Right lobe of liver (tissue), 6 donors: ENCODE measurements at regions of chr11 and their contacts with region 1.

Region 1: DNA sequence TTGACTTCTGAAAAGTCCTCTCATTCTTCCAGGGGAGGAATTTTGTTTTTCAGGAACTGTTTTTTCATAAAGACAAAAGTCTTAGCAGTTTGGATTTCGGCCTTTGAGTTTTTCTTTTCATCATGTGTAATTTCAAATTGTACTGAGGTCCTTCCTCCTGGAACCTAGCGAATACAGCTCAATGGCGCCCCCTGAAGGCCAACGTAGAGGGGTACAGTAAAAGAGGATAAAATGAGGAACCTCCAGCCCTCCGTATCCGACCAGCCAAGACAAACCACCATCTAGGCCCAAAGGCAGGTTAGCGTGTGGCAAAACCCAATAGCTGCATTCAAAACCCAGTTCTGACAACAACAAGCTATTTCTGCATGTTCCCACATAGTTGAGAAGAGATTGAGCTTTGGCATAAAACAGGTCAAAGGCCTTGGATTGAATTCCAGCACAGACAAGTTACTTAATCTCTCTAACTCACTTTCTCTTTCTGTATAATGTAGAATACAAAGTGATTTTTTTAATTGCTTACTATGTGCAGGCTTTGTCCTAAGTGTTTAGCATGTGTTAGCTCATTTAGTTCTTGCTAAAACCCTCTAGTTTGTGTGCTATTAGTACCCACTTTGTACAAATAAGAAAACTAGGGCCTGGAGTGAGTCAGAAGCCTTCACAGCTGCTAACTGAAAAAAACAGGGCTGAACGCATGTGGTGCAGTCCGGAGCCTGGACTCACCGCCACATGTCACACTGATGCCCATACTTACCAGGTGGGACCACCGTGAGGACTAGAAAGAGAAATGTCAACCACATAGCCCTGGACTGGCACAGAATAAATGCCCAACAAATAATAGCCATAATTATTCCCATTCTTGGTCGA is 43.2 kb upstream of the ETS1 start:
- DNase-seq: peak; percentile 89 to 91 (median 89)
- ATAC-seq: peak; percentile 89 to 91 (median 91)
- H3K4me3 ChIP-seq: no peak overlapping the region
- H3K27ac ChIP-seq: peak overlapping the region; percentile 28 to 58 (median 42)
- H3K4me1 ChIP-seq: peaks cover 0 to 30% (median 12%) of the 10 kb centered on the region in 4 donors
- H3K27me3 ChIP-seq: no peaks in the 10 kb centered on the region
- CTCF ChIP-seq: peak; percentile 90 to 97 (median 92)
- POLR2A ChIP-seq: no peak

Region 2: GRCh38 chr11:128279866-128280265 is 350.7 kb before region 1 on chr11:
- intact Hi-C with region 1: loop called in 1 of 2 experiments (anchors 10 kb)
- DNase-seq: no peak
- ATAC-seq: peak in 1 of 4 donors; percentile 23
- H3K4me3 ChIP-seq: no peak overlapping the region
- H3K27ac ChIP-seq: no peak overlapping the region
- H3K4me1 ChIP-seq: no peaks in the 10 kb centered on the region
- H3K27me3 ChIP-seq: no peaks in the 10 kb centered on the region
- CTCF ChIP-seq: no peak
- POLR2A ChIP-seq: no peak

Region 3: DNA sequence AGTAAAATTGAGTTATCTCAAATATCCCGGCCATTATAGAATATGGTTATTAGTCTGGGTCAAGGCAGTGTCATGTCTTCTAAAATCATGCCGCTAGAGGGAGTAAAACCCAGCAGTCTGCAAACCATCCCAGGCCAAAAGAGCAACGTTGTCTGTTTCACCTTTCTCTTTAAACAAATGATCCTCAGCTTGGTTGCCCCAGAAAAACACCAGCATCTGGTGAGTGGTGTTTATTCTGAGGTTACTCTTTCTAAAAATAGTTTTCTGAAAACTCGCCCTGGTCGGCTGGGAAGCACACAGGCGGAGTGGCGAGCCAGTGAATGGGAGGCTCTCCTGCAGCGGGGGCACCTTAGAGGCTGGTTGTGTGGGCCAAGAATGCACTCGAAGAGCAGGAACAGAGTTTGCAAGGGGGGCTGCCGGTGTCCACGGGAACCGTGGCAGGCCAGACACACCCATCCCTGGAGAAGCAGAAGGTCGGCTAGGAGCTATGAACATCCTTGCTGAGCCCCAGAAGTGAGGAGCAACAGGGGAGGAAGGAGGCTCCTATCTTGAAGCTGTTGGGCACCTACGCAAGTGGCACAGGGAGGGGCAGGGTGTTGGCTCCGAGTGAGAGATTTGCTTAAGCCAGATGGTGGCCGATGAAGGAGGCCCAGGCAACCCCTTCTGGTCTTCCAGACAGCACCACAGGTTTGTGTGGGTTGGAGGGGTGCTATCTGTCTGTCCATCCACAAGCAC is 340.3 kb before region 1 on chr11:
- intact Hi-C with region 1: loop called (anchors 10 kb)
- DNase-seq: peak in 2 of 3 donors; percentile 44 to 60
- ATAC-seq: peak; percentile 91 to 95 (median 95)
- H3K4me3 ChIP-seq: no peak overlapping the region
- H3K27ac ChIP-seq: peak overlapping the region; percentile 24 to 77 (median 34)
- H3K4me1 ChIP-seq: peaks cover 0 to 5% (median 0%) of the 10 kb centered on the region in 4 donors
- H3K27me3 ChIP-seq: no peaks in the 10 kb centered on the region
- CTCF ChIP-seq: peak; percentile 83 to 94 (median 87)
- POLR2A ChIP-seq: peak; percentile 32

Region 4: GRCh38 chr11:128482512-128483191 is 147.9 kb before region 1 on chr11:
- intact Hi-C with region 1: loop called in 1 of 2 experiments (anchors 10 kb)
- DNase-seq: no peak
- ATAC-seq: peak in 3 of 4 donors; percentile 9 to 27 (median 18)
- H3K4me3 ChIP-seq: no peak overlapping the region
- H3K27ac ChIP-seq: peak overlapping the region; percentile 18 to 47 (median 41)
- H3K4me1 ChIP-seq: peaks cover 0 to 20% (median 0%) of the 10 kb centered on the region in 4 donors
- H3K27me3 ChIP-seq: no peaks in the 10 kb centered on the region
- CTCF ChIP-seq: no peak
- POLR2A ChIP-seq: no peak

Region 5: GRCh38 chr11:128522055-128522942 is 108.3 kb before region 1 on chr11:
- intact Hi-C with region 1: no loop called
- DNase-seq: peak; percentile 96 to 97 (median 97)
- ATAC-seq: peak; percentile 91 to 98 (median 96)
- H3K4me3 ChIP-seq: peak overlapping the region; percentile 59 to 67 (median 66)
- H3K27ac ChIP-seq: peak overlapping the region; percentile 81 to 93 (median 87)
- H3K4me1 ChIP-seq: peaks cover 0 to 6% (median 0%) of the 10 kb centered on the region in 4 donors
- H3K27me3 ChIP-seq: no peaks in the 10 kb centered on the region
- CTCF ChIP-seq: peak in 1 of 4 donors; percentile 15
- POLR2A ChIP-seq: peak; percentile 94